Sciatic nerve (tissue), 2 donors: ENCODE measurements at regions of chr9 and their contacts with region 1.

Region 1: GRCh38 chr9:84652577-84653061 is 16.9 kb upstream of the NTRK2 start:
- DNase-seq: no peak
- ATAC-seq: peak; percentile 59

Region 2: GRCh38 chr9:85414390-85414789 is 761.8 kb after region 1 on chr9:
- intact Hi-C with region 1: loop called (anchors 10 kb)
- DNase-seq: no peak
- ATAC-seq: no peak